Breast epithelium (tissue), 4 donors: ENCODE measurements at regions of chr20 and their contacts with region 1.

Region 1: DNA sequence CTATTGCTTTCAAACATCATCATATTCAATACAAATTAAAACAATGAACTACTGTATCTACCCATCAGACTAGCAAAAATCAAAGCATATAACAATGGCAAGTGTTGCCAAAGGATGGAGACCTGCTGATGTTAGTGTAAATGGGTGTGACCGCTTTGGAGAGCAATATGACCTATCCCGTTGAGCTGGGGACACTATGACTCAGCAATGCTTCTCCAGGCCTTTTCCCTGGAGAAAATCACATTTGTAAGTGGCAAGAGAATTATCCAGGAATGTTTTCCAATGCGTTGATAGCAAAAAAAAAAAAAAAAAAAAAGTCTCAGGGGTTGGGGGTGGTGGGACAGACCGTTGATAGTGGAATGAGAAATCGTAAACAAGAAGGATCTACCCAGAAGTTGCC is 46.1 kb downstream of the PHACTR3 start:
- DNase-seq: no peak
- H3K4me3 ChIP-seq: no peak overlapping the region
- H3K27ac ChIP-seq: no peak overlapping the region
- H3K4me1 ChIP-seq: no peaks in the 10 kb centered on the region
- H3K27me3 ChIP-seq: peaks cover 0 to 4% of the 10 kb centered on the region in 2 donors
- CTCF ChIP-seq: no peak
- POLR2A ChIP-seq: no peak

Region 2: DNA sequence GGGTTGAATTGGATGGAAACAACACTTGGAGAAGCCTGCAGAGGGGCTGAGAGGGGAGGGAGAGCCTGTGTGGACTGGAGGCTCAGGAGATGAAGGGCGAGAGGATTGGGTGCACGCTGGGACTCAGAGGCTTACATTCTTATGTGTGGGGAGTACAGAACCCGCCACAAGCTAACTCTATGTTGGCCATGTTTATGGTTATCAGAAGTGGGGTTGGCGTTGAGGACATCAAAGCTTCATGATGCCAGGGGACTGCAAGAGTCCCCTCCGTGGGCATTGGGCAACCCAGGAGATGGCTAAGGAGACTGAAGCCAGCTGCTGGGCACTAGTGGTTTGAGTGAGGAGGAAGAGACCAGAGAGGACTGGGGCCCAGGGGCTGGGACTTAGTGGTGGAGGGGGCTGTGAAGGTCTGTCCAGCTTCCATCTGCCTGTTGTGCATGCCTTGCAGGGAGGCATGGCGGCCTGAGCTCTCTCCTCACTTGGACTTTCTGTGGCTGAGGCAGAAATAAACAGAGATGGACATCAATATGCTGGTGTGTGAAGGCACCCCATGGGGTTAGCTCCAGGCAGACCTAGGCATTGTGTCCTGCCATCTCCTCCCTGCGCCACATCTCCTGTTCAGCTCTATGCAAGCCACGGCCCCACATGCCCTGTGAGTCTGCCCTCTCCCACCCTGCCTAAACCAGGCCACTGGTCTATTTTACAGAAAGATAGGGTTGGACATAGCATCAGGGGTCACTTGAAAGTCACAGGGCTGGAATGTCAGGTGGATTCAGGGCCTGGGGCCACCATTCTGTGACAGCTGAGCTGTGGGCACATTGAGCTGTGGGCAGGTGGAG is 15.4 kb after region 1 on chr20:
- intact Hi-C with region 1: loop called (anchors 1 kb)
- DNase-seq: no peak
- H3K4me3 ChIP-seq: no peak overlapping the region
- H3K27ac ChIP-seq: no peak overlapping the region
- H3K4me1 ChIP-seq: no peaks in the 10 kb centered on the region
- H3K27me3 ChIP-seq: peaks cover 0 to 55% of the 10 kb centered on the region in 2 donors
- CTCF ChIP-seq: no peak
- POLR2A ChIP-seq: no peak